Activated B cell treated with CpG ODN at 0.5 μM for 24 hours (primary cell): ENCODE measurements at regions of chr2 and their contacts with region 1.

Region 1: GRCh38 chr2:134290358-134290757 is 36.5 kb downstream of the MGAT5 start:
- DNase-seq: no peak
- ATAC-seq: peak; percentile 49
- H3K4me3 Mint-ChIP-seq: no peak overlapping the region
- H3K27ac Mint-ChIP-seq: no peak overlapping the region
- H3K4me1 Mint-ChIP-seq: no peaks in the 10 kb centered on the region
- H3K27me3 Mint-ChIP-seq: no peaks in the 10 kb centered on the region
- CTCF ChIP-seq: no peak

Region 2: DNA sequence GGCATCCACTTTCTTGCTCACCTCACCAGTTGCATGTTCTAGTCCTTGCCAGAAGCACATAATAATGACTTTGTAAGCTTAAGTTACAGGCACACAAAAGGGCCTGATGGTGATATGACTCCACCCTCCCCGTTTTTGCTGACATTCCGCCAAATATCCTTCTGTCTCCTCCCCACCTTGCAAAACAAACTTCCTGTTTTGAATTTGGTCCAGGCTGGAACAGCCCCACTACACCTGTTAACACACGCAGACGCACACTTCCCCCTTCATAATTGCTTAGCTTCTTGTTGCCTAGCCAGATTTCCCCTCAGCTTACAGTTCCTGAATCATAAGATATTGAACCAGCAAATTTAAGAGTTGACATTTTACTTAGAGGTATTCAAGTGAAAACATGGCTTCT is 36.6 kb before region 1 on chr2 and contains the start of gene MGAT5:
- CTCF ChIA-PET with region 1: interaction called, 3 read pairs
- POLR2A ChIA-PET with region 1: interaction called, 8 read pairs
- intact Hi-C with region 1: loop called (anchors 1 kb)
- DNase-seq: no peak
- ATAC-seq: peak; percentile 43
- H3K4me3 Mint-ChIP-seq: peak within 1 kb of the TSS; percentile 74
- H3K27ac Mint-ChIP-seq: peak within 1 kb of the TSS; percentile 95
- H3K4me1 Mint-ChIP-seq: peaks cover 95% of the 10 kb centered on the region
- H3K27me3 Mint-ChIP-seq: no peaks in the 10 kb centered on the region
- CTCF ChIP-seq: no peak
- total RNA-seq, gene MGAT5: 66.7 and 69.0 TPM in 2 replicates

Region 3: DNA sequence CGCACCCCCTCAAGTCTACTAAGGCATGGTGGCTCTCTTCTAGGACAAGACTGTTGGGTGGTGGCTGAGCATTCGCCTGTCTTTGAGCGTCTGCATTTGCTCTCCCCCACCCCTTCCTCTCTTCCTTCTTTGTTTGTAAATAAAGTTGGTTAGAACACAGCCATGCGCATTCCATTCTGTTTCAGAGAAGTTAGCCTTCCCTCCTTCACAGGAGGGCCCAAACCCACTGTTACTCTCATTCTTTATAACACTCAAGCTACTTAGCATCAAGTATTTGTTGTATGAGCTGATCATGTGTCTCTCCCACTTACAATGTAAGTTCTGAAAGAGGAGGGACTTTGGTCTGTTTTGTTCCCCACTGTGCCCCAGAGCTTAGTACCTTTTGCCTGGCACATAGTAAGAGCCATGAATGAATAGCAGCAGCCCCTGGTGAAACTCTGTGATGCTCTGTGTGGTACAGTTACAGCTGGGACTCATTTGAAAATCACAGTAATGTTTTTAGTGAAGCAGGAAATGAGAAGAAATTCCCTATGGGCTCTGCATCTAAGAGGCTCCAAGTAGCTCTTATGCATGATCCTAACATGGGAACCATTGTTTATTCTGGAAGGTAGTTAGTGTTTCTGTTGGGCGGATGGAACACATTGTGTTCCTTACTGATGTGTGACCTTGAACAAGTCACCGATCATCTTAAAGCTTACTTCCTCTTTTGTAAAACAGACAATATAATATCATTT is 28.8 kb before region 1 on chr2:
- CTCF ChIA-PET with region 1: no interaction called
- POLR2A ChIA-PET with region 1: interaction called, 11 read pairs
- intact Hi-C with region 1: no loop called
- DNase-seq: no peak
- ATAC-seq: peak; percentile 66
- H3K4me3 Mint-ChIP-seq: peak overlapping the region; percentile 38
- H3K27ac Mint-ChIP-seq: peak overlapping the region; percentile 97
- H3K4me1 Mint-ChIP-seq: peaks cover 91% of the 10 kb centered on the region
- H3K27me3 Mint-ChIP-seq: no peaks in the 10 kb centered on the region
- CTCF ChIP-seq: no peak

Region 4: DNA sequence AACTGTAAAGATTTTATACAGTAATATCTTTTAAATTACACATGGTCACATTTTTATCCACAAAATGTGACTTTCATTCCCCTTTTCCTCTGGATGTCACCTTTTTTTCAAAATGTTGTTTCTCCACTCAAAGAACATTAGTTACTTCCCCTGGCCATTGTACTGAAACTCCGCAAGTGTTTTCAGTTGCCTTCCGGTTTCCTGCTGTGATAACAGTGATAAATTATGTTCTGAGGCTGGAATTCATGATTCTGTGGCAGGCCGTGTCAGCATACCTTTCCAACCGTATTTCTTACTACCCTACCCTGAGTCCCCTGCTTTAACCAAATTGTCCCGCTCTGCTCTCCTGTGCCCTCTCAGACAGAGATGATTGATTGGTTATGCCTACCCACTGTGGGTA is 17.0 kb after region 1 on chr2:
- CTCF ChIA-PET with region 1: no interaction called
- POLR2A ChIA-PET with region 1: interaction called, 5 read pairs
- intact Hi-C with region 1: loop called (anchors 1 kb)
- DNase-seq: no peak
- ATAC-seq: no peak
- H3K4me3 Mint-ChIP-seq: peak overlapping the region; percentile 35
- H3K27ac Mint-ChIP-seq: peak overlapping the region; percentile 46
- H3K4me1 Mint-ChIP-seq: peaks cover 89% of the 10 kb centered on the region
- H3K27me3 Mint-ChIP-seq: no peaks in the 10 kb centered on the region
- CTCF ChIP-seq: no peak